ENCODE measurements at regions of chr16 and their contacts with region 1.

Region 1: GRCh38 chr16:788394-789126 is at the start of gene CHTF18:
- DNase-seq: peak; percentile 100
- H3K4me3 ChIP-seq: peak within 1 kb of the TSS; percentile 84 to 91
- H3K27ac ChIP-seq: peak within 1 kb of the TSS in 1 of 2 experiments; percentile 76; a peak in 2 of 4 replicates
- H3K4me1 ChIP-seq: peaks cover 0 to 19% of the 10 kb centered on the region in 2 experiments; a peak in 1 of 4 replicates
- H3K27me3 ChIP-seq: no peaks in the 10 kb centered on the region
- CTCF ChIP-seq: no peak
- EP300 ChIP-seq: no peak
- RAD21 ChIP-seq: no peak
- polyA plus RNA-seq, gene CHTF18: 17.7 and 18.0 TPM in 2 replicates

Region 2: GRCh38 chr16:705748-706188 is 82.8 kb before region 1 on chr16 and contains the start of gene FBXL16:
- CTCF ChIA-PET with region 1: interaction called, 41 read pairs
- POLR2A ChIA-PET with region 1: interaction called, 4 read pairs
- DNase-seq: peak; percentile 98
- H3K4me3 ChIP-seq: peak within 1 kb of the TSS; percentile 78 to 82
- H3K27ac ChIP-seq: peak within 1 kb of the TSS in 1 of 2 experiments; percentile 64; a peak in 1 of 4 replicates
- H3K4me1 ChIP-seq: peaks cover 15 to 37% of the 10 kb centered on the region in 2 experiments; a peak in 2 of 4 replicates
- H3K27me3 ChIP-seq: no peaks in the 10 kb centered on the region
- CTCF ChIP-seq: no peak
- EP300 ChIP-seq: no peak
- RAD21 ChIP-seq: no peak
- polyA plus RNA-seq, gene FBXL16: 17.7 and 19.8 TPM in 2 replicates

Region 3: GRCh38 chr16:720990-721764 is 67.4 kb before region 1 on chr16 and contains the start of gene ANTKMT:
- CTCF ChIA-PET with region 1: interaction called, 127 read pairs
- POLR2A ChIA-PET with region 1: interaction called, 18 read pairs
- DNase-seq: peak; percentile 92
- H3K4me3 ChIP-seq: peak within 1 kb of the TSS; percentile 86 to 89
- H3K27ac ChIP-seq: peak within 1 kb of the TSS; percentile 91 to 99
- H3K4me1 ChIP-seq: peaks cover 8 to 43% of the 10 kb centered on the region in 2 experiments; a peak in 3 of 4 replicates
- H3K27me3 ChIP-seq: no peaks in the 10 kb centered on the region
- CTCF ChIP-seq: no peak
- EP300 ChIP-seq: no peak
- RAD21 ChIP-seq: no peak
- polyA plus RNA-seq, gene ANTKMT: 49.5 and 57.4 TPM in 2 replicates

Region 4: GRCh38 chr16:740764-741505 is 47.6 kb before region 1 on chr16 and contains the start of gene CIAO3:
- CTCF ChIA-PET with region 1: interaction called, 18 read pairs
- POLR2A ChIA-PET with region 1: interaction called, 3 read pairs
- DNase-seq: peak; percentile 99
- H3K4me3 ChIP-seq: peak within 1 kb of the TSS; percentile 85 to 87
- H3K27ac ChIP-seq: peak within 1 kb of the TSS in 1 of 2 experiments; percentile 24; a peak in 1 of 4 replicates
- H3K4me1 ChIP-seq: peaks cover 0 to 10% of the 10 kb centered on the region in 2 experiments; a peak in 1 of 4 replicates
- H3K27me3 ChIP-seq: no peaks in the 10 kb centered on the region
- CTCF ChIP-seq: peak; percentile 74
- EP300 ChIP-seq: no peak
- RAD21 ChIP-seq: no peak; the same call in 1 of the 2 replicates
- polyA plus RNA-seq, gene CIAO3: 14.4 TPM in 2 replicates

Region 5: GRCh38 chr16:799948-800833 is 11.6 kb after region 1 on chr16 and contains the start of gene GNG13:
- CTCF ChIA-PET with region 1: interaction called, 15 read pairs
- POLR2A ChIA-PET with region 1: interaction called, 4 read pairs
- DNase-seq: peak; percentile 74
- H3K4me3 ChIP-seq: peak within 1 kb of the TSS in 1 of 2 experiments; percentile 28; a peak in 2 of 4 replicates
- H3K27ac ChIP-seq: no peak within 1 kb of the TSS
- H3K4me1 ChIP-seq: peaks cover 0 to 6% of the 10 kb centered on the region in 2 experiments; a peak in 1 of 4 replicates
- H3K27me3 ChIP-seq: peaks cover 24% of the 10 kb centered on the region; the same call in 1 of the 2 replicates
- CTCF ChIP-seq: no peak
- EP300 ChIP-seq: no peak
- RAD21 ChIP-seq: no peak
- polyA plus RNA-seq, gene GNG13: not detected in 2 replicates

Region 6: GRCh38 chr16:813204-813915 is 24.8 kb after region 1 on chr16:
- CTCF ChIA-PET with region 1: no interaction called
- POLR2A ChIA-PET with region 1: no interaction called
- DNase-seq: peak; percentile 92
- H3K4me3 ChIP-seq: peak overlapping the region; percentile 15 to 53
- H3K27ac ChIP-seq: no peak overlapping the region
- H3K4me1 ChIP-seq: peaks cover 0 to 9% of the 10 kb centered on the region in 2 experiments; a peak in 1 of 4 replicates
- H3K27me3 ChIP-seq: peaks cover 9% of the 10 kb centered on the region; the same call in 1 of the 2 replicates
- CTCF ChIP-seq: peak; percentile 68
- EP300 ChIP-seq: no peak
- RAD21 ChIP-seq: peak; percentile 77

Region 7: GRCh38 chr16:1002399-1003161 is 214.0 kb after region 1 on chr16:
- CTCF ChIA-PET with region 1: no interaction called
- POLR2A ChIA-PET with region 1: no interaction called
- DNase-seq: no peak
- H3K4me3 ChIP-seq: peak overlapping the region in 1 of 2 experiments; percentile 35; a peak in 1 of 4 replicates
- H3K27ac ChIP-seq: no peak overlapping the region
- H3K4me1 ChIP-seq: 0 out of 4 replicates have a peak, but pooled peaks cover 0 to 3% of the 10 kb centered on the region in 2 experiments
- H3K27me3 ChIP-seq: peaks cover 73% of the 10 kb centered on the region
- CTCF ChIP-seq: no peak
- EP300 ChIP-seq: peak in 1 of 2 experiments; percentile 46; a peak in 1 of 4 replicates
- RAD21 ChIP-seq: no peak

Measured in SK-N-SH (cell line).